ENCODE measurements at regions of chr12 and their contacts with region 1.

Region 1: GRCh38 chr12:59431266-59431665 is 164.6 kb upstream of the SLC16A7 start:
- DNase-seq: no peak
- H3K4me3 ChIP-seq: no peak overlapping the region
- H3K4me3 Mint-ChIP-seq: no peak overlapping the region
- H3K27ac Mint-ChIP-seq: no peak overlapping the region
- H3K4me1 ChIP-seq: 0 out of 2 replicates have a peak, but pooled peaks cover 11% of the 10 kb centered on the region
- H3K4me1 Mint-ChIP-seq: no peaks in the 10 kb centered on the region
- H3K27me3 ChIP-seq: no peaks in the 10 kb centered on the region
- H3K27me3 Mint-ChIP-seq: no peaks in the 10 kb centered on the region
- CTCF ChIP-seq: no peak

Region 2: GRCh38 chr12:59780605-59781135 is 349.4 kb after region 1 on chr12:
- CTCF ChIA-PET with region 1: no interaction called
- POLR2A ChIA-PET with region 1: no interaction called
- intact Hi-C with region 1: loop called (anchors 1 kb)
- DNase-seq: peak in 1 of 2 experiments; percentile 28
- H3K4me3 ChIP-seq: no peak overlapping the region
- H3K4me3 Mint-ChIP-seq: no peak overlapping the region
- H3K27ac Mint-ChIP-seq: no peak overlapping the region
- H3K4me1 ChIP-seq: no peaks in the 10 kb centered on the region
- H3K4me1 Mint-ChIP-seq: no peaks in the 10 kb centered on the region
- H3K27me3 ChIP-seq: no peaks in the 10 kb centered on the region
- H3K27me3 Mint-ChIP-seq: no peaks in the 10 kb centered on the region
- CTCF ChIP-seq: peak; percentile 16 to 45

Region 3: GRCh38 chr12:59808317-59808910 is 377.1 kb after region 1 on chr12:
- CTCF ChIA-PET with region 1: no interaction called
- POLR2A ChIA-PET with region 1: no interaction called
- intact Hi-C with region 1: loop called (anchors 1 kb)
- DNase-seq: peak in 1 of 2 experiments; percentile 17
- H3K4me3 ChIP-seq: no peak overlapping the region
- H3K4me3 Mint-ChIP-seq: no peak overlapping the region
- H3K27ac Mint-ChIP-seq: no peak overlapping the region
- H3K4me1 ChIP-seq: no peaks in the 10 kb centered on the region; the same call in 1 of the 2 replicates
- H3K4me1 Mint-ChIP-seq: no peaks in the 10 kb centered on the region
- H3K27me3 ChIP-seq: no peaks in the 10 kb centered on the region
- H3K27me3 Mint-ChIP-seq: peaks cover 2% of the 10 kb centered on the region
- CTCF ChIP-seq: peak; percentile 67 to 73

Measured in Caco-2 (cell line).